ENCODE measurements at regions of chr7 and their contacts with region 1.

Region 1: GRCh38 chr7:157336383-157337315 is at the start of gene DNAJB6:
- DNase-seq: peak; percentile 98 to 99 (median 99)
- ATAC-seq: peak; percentile 75
- H3K4me3 ChIP-seq: peak within 1 kb of the TSS; percentile 69
- H3K27ac ChIP-seq: peak within 1 kb of the TSS; percentile 90
- H3K4me1 ChIP-seq: peaks cover 21 to 25% of the 10 kb centered on the region in 2 experiments
- H3K27me3 ChIP-seq: no peaks in the 10 kb centered on the region; a peak in 1 of 5 replicates
- CTCF ChIP-seq: 0 out of 6 replicates have a peak, but pooled peaks of 1 of the 3 experiments have one; percentile 11
- EP300 ChIP-seq: peak; percentile 41
- POLR2A ChIP-seq: peak; percentile 94
- RAD21 ChIP-seq: no peak
- polyA plus RNA-seq, gene DNAJB6: 96.6 to 100 TPM

Region 2: GRCh38 chr7:157273208-157274093 is 63.2 kb before region 1 on chr7:
- CTCF ChIA-PET with region 1: interaction called, 3 read pairs
- POLR2A ChIA-PET with region 1: no interaction called
- in situ Hi-C with region 1: no loop called
- intact Hi-C with region 1: loop called (anchors 5 kb)
- DNase-seq: peak; percentile 89 to 99 (median 98)
- ATAC-seq: peak; percentile 92
- H3K4me3 ChIP-seq: no peak overlapping the region
- H3K27ac ChIP-seq: no peak overlapping the region
- H3K4me1 ChIP-seq: peaks cover 4 to 26% of the 10 kb centered on the region in 2 experiments; a peak in 4 of 5 replicates
- H3K27me3 ChIP-seq: peaks cover 0 to 6% of the 10 kb centered on the region in 2 experiments; a peak in 3 of 5 replicates
- CTCF ChIP-seq: peak; percentile 97 to 98 (median 98)
- EP300 ChIP-seq: no peak
- POLR2A ChIP-seq: no peak; the same call in 1 of the 2 replicates
- RAD21 ChIP-seq: peak; percentile 88 to 93

Region 3: GRCh38 chr7:157299613-157300368 is 36.9 kb before region 1 on chr7:
- CTCF ChIA-PET with region 1: no interaction called
- POLR2A ChIA-PET with region 1: no interaction called
- in situ Hi-C with region 1: no loop called
- intact Hi-C with region 1: loop called (anchors 5 kb)
- DNase-seq: peak; percentile 66 to 81 (median 80)
- ATAC-seq: peak; percentile 72
- H3K4me3 ChIP-seq: no peak overlapping the region
- H3K27ac ChIP-seq: no peak overlapping the region; the same call in 2 of the 3 replicates
- H3K4me1 ChIP-seq: peaks cover 17 to 31% of the 10 kb centered on the region in 2 experiments; a peak in 4 of 5 replicates
- H3K27me3 ChIP-seq: peaks cover 11 to 14% of the 10 kb centered on the region in 2 experiments; a peak in 4 of 5 replicates
- CTCF ChIP-seq: peak; percentile 55 to 72 (median 70)
- EP300 ChIP-seq: no peak
- POLR2A ChIP-seq: no peak
- RAD21 ChIP-seq: no peak

Region 4: GRCh38 chr7:157323419-157323818 is 13.2 kb before region 1 on chr7:
- CTCF ChIA-PET with region 1: no interaction called
- POLR2A ChIA-PET with region 1: interaction called, 18 read pairs
- in situ Hi-C with region 1: no loop called
- intact Hi-C with region 1: no loop called
- DNase-seq: no peak
- ATAC-seq: no peak; the same call in 2 of the 3 replicates
- H3K4me3 ChIP-seq: no peak overlapping the region
- H3K27ac ChIP-seq: no peak overlapping the region
- H3K4me1 ChIP-seq: peaks cover 9 to 20% of the 10 kb centered on the region in 2 experiments; a peak in 4 of 5 replicates
- H3K27me3 ChIP-seq: no peaks in the 10 kb centered on the region
- CTCF ChIP-seq: no peak
- EP300 ChIP-seq: no peak
- POLR2A ChIP-seq: no peak
- RAD21 ChIP-seq: no peak

Region 5: GRCh38 chr7:157347217-157347904 is 10.7 kb after region 1 on chr7:
- CTCF ChIA-PET with region 1: no interaction called
- POLR2A ChIA-PET with region 1: interaction called, 39 read pairs
- in situ Hi-C with region 1: no loop called
- intact Hi-C with region 1: no loop called
- DNase-seq: no peak
- ATAC-seq: peak; percentile 10; the same call in 1 of the 3 replicates
- H3K4me3 ChIP-seq: no peak overlapping the region
- H3K27ac ChIP-seq: no peak overlapping the region
- H3K4me1 ChIP-seq: peaks cover 5 to 28% of the 10 kb centered on the region in 2 experiments
- H3K27me3 ChIP-seq: no peaks in the 10 kb centered on the region
- CTCF ChIP-seq: no peak
- EP300 ChIP-seq: no peak
- POLR2A ChIP-seq: no peak
- RAD21 ChIP-seq: no peak

Region 6: GRCh38 chr7:157357129-157358040 is 20.7 kb after region 1 on chr7:
- CTCF ChIA-PET with region 1: no interaction called
- POLR2A ChIA-PET with region 1: interaction called, 39 read pairs
- in situ Hi-C with region 1: no loop called
- intact Hi-C with region 1: no loop called
- DNase-seq: no peak
- ATAC-seq: no peak
- H3K4me3 ChIP-seq: no peak overlapping the region
- H3K27ac ChIP-seq: no peak overlapping the region
- H3K4me1 ChIP-seq: peaks cover 9 to 19% of the 10 kb centered on the region in 2 experiments; a peak in 4 of 5 replicates
- H3K27me3 ChIP-seq: no peaks in the 10 kb centered on the region
- CTCF ChIP-seq: no peak
- EP300 ChIP-seq: no peak
- POLR2A ChIP-seq: no peak
- RAD21 ChIP-seq: no peak

Region 7: GRCh38 chr7:157386979-157387800 is 50.5 kb after region 1 on chr7:
- CTCF ChIA-PET with region 1: no interaction called
- POLR2A ChIA-PET with region 1: interaction called, 4 read pairs
- in situ Hi-C with region 1: no loop called
- intact Hi-C with region 1: loop called (anchors 5 kb)
- DNase-seq: peak; percentile 78 to 92 (median 84)
- ATAC-seq: peak; percentile 97
- H3K4me3 ChIP-seq: no peak overlapping the region
- H3K27ac ChIP-seq: peak overlapping the region; percentile 57
- H3K4me1 ChIP-seq: peaks cover 3 to 4% of the 10 kb centered on the region in 2 experiments; a peak in 2 of 5 replicates
- H3K27me3 ChIP-seq: no peaks in the 10 kb centered on the region
- CTCF ChIP-seq: peak; percentile 89 to 99 (median 94)
- EP300 ChIP-seq: peak; percentile 39
- POLR2A ChIP-seq: peak; percentile 48
- RAD21 ChIP-seq: peak; percentile 13 to 72; a peak in 3 of 4 replicates